Esophagus muscularis mucosa (tissue), 4 donors: ENCODE measurements at regions of chr6 and their contacts with region 1.

Region 1: GRCh38 chr6:167219967-167220512 is 62.3 kb upstream of the GPR31 start:
- DNase-seq: no peak
- H3K4me3 ChIP-seq: no peak overlapping the region
- H3K27ac ChIP-seq: no peak overlapping the region
- H3K4me1 ChIP-seq: no peaks in the 10 kb centered on the region
- H3K27me3 ChIP-seq: no peaks in the 10 kb centered on the region
- CTCF ChIP-seq: no peak
- EP300 ChIP-seq: no peak
- POLR2A ChIP-seq: no peak

Region 2: GRCh38 chr6:167285077-167285770 is 65.2 kb after region 1 on chr6:
- intact Hi-C with region 1: no loop called
- DNase-seq: no peak
- H3K4me3 ChIP-seq: no peak overlapping the region
- H3K27ac ChIP-seq: no peak overlapping the region
- H3K4me1 ChIP-seq: no peaks in the 10 kb centered on the region
- H3K27me3 ChIP-seq: no peaks in the 10 kb centered on the region
- CTCF ChIP-seq: no peak
- EP300 ChIP-seq: no peak
- POLR2A ChIP-seq: no peak

Region 3: DNA sequence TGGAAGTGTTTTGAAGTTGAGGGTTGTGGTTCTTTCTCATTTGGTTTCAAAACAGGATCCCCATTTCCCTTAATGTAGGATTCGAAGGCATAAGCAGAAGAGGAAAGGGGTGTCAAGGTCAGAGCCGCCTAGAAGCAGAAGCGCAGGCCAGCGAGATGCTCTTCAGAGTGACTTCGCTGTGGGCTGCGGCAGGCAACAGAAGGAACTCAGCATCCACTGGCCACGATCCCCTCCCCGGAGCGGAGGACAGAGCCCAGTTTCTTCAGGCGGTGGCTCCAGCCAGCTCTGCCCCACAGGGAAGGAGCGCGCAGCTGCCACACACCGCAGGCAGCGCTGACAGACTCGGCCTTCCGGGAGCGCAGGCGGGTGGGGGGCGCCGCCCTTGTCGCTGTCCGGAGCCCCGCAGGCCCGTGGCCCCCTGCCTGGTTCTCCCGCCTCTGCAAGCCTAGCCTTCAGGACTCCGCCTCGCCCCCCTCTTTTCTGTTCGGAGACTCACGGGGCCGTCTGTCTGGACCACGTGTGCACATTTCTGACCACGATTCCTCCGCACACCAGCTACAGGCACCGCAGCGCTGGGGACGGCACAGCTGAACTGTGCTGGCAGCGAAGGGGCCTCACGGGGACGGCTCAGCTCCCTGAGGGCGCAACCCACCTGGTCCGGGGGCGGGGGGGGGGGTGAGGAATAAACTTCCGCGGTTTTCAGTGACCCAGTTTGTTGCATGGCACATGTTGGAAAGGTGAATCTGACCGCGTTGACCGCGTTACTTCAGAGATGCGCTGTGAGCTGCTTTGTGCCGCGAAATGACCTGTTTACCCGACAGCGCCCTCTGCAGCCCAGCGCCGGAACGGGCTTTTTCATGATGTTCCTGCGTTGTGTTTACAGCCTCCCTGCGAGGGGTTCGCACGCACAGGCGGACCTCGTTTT is 131.0 kb after region 1 on chr6:
- intact Hi-C with region 1: loop called (anchors 10 kb)
- DNase-seq: no peak
- H3K4me3 ChIP-seq: peak overlapping the region; percentile 49 to 62 (median 54)
- H3K27ac ChIP-seq: peak overlapping the region in 3 of 4 donors; percentile 28 to 65 (median 34)
- H3K4me1 ChIP-seq: peaks cover 6 to 17% (median 13%) of the 10 kb centered on the region in 4 donors
- H3K27me3 ChIP-seq: peaks cover 0 to 17% (median 2%) of the 10 kb centered on the region in 4 donors
- CTCF ChIP-seq: peak; percentile 68 to 78 (median 71)
- EP300 ChIP-seq: no peak
- POLR2A ChIP-seq: no peak

Region 4: DNA sequence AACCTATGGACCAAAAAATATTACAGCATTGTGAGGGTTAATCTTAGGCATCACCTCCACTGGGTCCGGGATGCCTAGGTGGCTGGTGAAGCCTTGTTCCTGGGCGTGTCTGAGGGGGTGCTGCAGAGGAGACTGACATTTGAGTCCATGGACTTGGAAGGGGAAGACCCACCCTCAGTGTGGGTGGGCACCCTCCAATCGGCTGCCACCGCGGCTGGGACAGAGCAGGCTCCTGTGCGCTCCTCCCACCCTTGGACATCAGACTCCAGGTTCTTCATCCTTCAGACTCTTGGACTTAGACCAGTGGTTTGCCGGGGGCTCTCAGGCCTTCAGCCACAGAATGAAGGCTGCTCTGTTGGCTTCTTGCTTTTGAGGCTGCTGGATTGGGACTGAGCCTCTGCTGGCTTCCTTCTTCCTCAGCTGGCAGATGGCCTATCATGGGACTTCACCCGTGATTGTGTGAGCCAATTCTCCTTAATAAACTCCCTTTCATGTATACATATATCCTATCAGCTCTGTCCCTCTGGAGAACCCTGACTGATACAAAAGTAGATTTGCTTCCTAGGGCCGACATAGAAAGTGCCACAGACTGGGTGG is 217.9 kb after region 1 on chr6:
- intact Hi-C with region 1: no loop called
- DNase-seq: peak; percentile 64
- H3K4me3 ChIP-seq: no peak overlapping the region
- H3K27ac ChIP-seq: no peak overlapping the region
- H3K4me1 ChIP-seq: peaks cover 0 to 15% (median 12%) of the 10 kb centered on the region in 4 donors
- H3K27me3 ChIP-seq: no peaks in the 10 kb centered on the region
- CTCF ChIP-seq: no peak
- EP300 ChIP-seq: no peak
- POLR2A ChIP-seq: no peak